Activated CD4-positive, alpha-beta T cell treated with anti-CD3 and anti-CD28 coated beads, Interleukin-2, amount 10 ng/mL, durations not matched to agents 24 days and 14 days (primary cell): ENCODE measurements at regions of chr19 and their contacts with region 1.

Region 1: DNA sequence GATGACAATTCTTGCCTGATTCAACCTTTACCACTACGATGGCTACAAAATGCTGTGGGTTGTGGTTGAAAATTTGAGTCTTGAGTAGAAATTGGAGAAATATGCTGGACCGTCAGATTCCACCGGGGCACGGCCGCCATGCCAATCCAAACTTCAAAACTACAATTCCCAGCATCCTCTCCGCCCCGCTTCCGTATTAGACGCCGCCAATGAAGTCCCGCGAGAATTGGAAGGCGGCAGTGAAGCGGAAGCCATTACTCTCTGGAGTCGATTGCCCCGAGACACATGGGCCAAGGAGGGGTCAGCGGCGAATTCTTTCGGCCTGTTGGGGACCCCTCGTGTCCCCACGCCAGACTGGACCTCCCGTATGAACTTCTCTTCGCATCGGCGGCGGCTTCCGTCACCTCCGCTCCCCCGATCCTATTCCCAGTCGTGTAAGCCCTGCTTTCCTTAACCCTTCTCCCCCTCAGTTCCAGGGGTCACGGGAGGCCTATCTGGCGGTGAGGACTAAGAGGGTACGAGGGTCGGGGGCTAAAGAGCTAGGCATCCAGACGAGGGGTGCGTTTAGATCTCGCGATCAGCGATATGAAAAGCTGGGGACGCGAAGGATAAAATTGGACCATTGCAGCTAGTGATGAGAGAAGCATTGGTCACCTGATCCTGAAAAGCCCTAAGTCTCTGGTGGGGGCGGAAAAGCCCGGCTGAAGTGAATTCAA is at the start of gene ZNF317:
- DNase-seq: peak; percentile 97
- H3K4me3 Mint-ChIP-seq: peak within 1 kb of the TSS; percentile 97
- H3K27ac Mint-ChIP-seq: peak within 1 kb of the TSS; percentile 97
- H3K4me1 Mint-ChIP-seq: peaks cover 24% of the 10 kb centered on the region
- H3K27me3 Mint-ChIP-seq: no peaks in the 10 kb centered on the region
- total RNA-seq, gene ZNF317: 47.1 and 50.2 TPM in 2 replicates

Region 2: GRCh38 chr19:9205501-9206113 is 65.3 kb after region 1 on chr19:
- intact Hi-C with region 1: loop called (anchors 5 kb)
- DNase-seq: peak; percentile 90
- H3K4me3 Mint-ChIP-seq: peak overlapping the region; percentile 56
- H3K27ac Mint-ChIP-seq: no peak overlapping the region
- H3K4me1 Mint-ChIP-seq: peaks cover 5% of the 10 kb centered on the region
- H3K27me3 Mint-ChIP-seq: no peaks in the 10 kb centered on the region

Region 3: DNA sequence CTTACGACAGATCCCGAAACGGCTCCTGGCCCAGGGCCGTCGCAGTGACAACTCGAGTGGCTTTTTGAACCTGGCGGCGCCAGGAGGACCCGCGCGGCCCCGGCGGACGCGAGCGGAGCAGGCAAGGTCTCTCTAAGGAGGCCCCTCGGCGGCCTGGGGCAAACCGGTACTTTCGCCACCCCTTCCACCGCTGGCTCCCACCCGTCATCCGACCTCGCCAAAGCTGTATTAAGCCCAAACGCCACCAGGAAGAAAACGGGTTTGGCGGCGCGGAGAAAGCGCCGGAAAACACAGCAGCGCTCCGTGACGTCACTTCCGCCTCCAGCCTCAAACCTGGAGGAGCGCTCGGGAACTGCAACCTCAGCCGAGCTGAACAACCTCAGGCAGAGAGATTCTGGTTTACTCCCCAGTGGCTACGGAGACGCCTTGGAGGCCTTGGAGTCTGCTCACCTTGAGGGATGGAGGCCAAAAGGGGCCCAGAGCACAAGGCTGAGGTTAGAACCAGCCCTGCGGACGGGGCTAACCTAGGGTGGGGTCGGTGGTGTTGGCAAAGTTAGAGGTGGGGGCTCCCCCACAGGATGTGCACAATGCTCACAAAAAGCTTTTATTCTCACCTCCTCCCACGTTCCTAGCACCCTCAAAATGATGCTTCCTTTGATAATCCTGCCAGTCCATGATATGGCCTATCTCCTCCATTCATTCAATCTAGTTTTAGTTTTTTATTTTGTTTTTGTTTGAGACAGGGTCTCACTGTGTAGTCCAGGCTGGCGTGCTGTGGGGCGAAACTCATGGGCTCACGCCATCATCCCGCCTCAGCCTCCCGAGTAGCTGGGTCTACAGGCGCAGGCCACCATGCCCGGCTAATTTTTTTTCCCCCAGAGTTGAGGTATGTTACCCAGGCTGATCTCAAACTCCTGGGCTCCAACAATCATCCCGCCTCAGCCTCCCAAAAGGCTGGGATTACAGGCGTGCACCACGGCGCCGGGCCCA is 295.3 kb after region 1 on chr19 and contains the start of gene ZNF266:
- intact Hi-C with region 1: loop called (anchors 2 kb)
- DNase-seq: peak; percentile 98
- H3K4me3 Mint-ChIP-seq: peak within 1 kb of the TSS; percentile 96
- H3K27ac Mint-ChIP-seq: peak within 1 kb of the TSS; percentile 99
- H3K4me1 Mint-ChIP-seq: peaks cover 22% of the 10 kb centered on the region
- H3K27me3 Mint-ChIP-seq: no peaks in the 10 kb centered on the region
- total RNA-seq, gene ZNF266: 24.9 and 25.3 TPM in 2 replicates

Region 4: GRCh38 chr19:9621156-9622037 is 481.1 kb after region 1 on chr19 and contains the start of gene ZNF561:
- intact Hi-C with region 1: loop called (anchors 1 kb)
- DNase-seq: peak; percentile 96
- H3K4me3 Mint-ChIP-seq: peak within 1 kb of the TSS; percentile 97
- H3K27ac Mint-ChIP-seq: peak within 1 kb of the TSS; percentile 98
- H3K4me1 Mint-ChIP-seq: peaks cover 23% of the 10 kb centered on the region
- H3K27me3 Mint-ChIP-seq: peaks cover 2% of the 10 kb centered on the region
- total RNA-seq, gene ZNF561: 35.3 and 37.2 TPM in 2 replicates